CD14-positive monocyte (primary cell): ENCODE measurements at regions of chr10 and their contacts with region 1.

Region 1: DNA sequence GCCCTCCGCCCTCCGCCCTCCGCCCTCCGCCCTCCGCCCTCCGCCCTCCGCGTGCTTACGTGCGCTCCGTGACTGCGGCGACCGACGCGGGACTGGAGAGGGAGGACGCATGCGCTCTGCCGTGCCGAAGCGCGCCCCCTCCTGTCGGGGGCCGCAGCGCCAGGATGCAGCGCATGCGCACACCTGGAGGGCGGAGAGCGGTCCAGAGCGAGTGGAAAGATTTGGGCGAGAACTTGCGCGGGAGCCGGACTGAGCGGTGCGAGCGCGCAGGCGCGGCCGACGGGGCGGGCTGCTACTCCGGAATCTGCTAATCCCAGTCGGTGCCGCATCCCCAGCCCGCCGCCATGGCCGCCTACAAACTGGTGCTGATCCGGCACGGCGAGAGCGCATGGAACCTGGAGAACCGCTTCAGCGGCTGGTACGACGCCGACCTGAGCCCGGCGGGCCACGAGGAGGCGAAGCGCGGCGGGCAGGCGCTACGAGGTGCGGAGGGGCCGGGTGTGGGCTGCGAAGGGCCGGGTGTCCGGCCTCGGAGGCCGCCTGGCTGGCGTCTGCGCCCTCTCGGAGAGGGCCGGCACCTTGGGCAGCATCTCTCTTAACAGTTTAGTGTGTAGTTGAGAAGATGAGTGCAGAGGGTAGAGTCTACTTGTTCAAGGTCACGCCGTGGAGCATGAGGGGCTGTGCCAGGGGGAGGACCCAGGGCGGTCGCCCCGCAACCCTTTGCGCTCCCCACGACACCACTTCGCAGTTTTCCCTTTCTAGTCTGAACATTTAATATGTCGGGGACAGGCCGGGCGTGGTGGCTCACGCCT is at the start of gene PGAM1:
- DNase-seq: peak; percentile 96 to 99 (median 97)
- H3K4me3 ChIP-seq: peak within 1 kb of the TSS; percentile 80 to 96 (median 82)
- H3K4me3 Mint-ChIP-seq: peak within 1 kb of the TSS; percentile 85 to 90
- H3K27ac ChIP-seq: peak within 1 kb of the TSS; percentile 94 to 95
- H3K27ac Mint-ChIP-seq: peak within 1 kb of the TSS; percentile 92 to 99 (median 95)
- H3K4me1 ChIP-seq: peaks cover 75 to 80% of the 10 kb centered on the region in 2 donors
- H3K4me1 Mint-ChIP-seq: peaks cover 61% of the 10 kb centered on the region
- H3K27me3 ChIP-seq: no peaks in the 10 kb centered on the region
- H3K27me3 Mint-ChIP-seq: no peaks in the 10 kb centered on the region
- CTCF ChIP-seq: peak; percentile 65
- polyA plus RNA-seq, gene PGAM1: 276 to 749 (median 498) TPM

Region 2: DNA sequence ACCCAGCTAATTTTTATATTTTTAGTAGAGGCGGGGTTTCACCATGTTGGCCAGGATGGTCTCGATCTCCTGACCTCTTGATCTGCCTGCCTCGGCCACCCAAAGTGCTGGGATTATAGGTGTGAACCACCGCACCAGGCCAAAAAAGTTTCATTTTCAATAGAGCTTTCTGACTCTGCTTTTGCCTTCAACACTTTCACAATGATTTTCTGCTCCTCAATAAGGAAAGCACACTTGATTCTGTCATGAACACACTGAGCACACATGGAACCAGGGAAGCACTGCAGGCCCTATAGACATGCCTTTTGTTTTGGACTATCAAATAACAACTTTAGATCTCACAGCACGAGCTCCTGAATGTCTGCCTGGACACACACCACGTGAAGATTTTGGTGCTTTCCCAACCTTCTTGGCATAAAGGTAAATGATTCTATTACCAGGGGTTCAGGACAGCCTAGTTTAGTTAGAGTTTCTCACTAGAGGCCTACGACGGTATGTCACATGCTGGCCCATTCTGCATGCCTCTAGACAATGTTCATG is 33.1 kb before region 1 on chr10:
- intact Hi-C with region 1: no loop called
- DNase-seq: no peak
- H3K4me3 ChIP-seq: no peak overlapping the region
- H3K4me3 Mint-ChIP-seq: no peak overlapping the region
- H3K27ac ChIP-seq: no peak overlapping the region
- H3K27ac Mint-ChIP-seq: peak overlapping the region in 1 of 7 donors; percentile 7
- H3K4me1 ChIP-seq: peaks cover 16 to 24% of the 10 kb centered on the region in 2 donors
- H3K4me1 Mint-ChIP-seq: peaks cover 20% of the 10 kb centered on the region
- H3K27me3 ChIP-seq: no peaks in the 10 kb centered on the region
- H3K27me3 Mint-ChIP-seq: peaks cover 0 to 2% (median 0%) of the 10 kb centered on the region in 3 donors
- CTCF ChIP-seq: no peak

Region 3: DNA sequence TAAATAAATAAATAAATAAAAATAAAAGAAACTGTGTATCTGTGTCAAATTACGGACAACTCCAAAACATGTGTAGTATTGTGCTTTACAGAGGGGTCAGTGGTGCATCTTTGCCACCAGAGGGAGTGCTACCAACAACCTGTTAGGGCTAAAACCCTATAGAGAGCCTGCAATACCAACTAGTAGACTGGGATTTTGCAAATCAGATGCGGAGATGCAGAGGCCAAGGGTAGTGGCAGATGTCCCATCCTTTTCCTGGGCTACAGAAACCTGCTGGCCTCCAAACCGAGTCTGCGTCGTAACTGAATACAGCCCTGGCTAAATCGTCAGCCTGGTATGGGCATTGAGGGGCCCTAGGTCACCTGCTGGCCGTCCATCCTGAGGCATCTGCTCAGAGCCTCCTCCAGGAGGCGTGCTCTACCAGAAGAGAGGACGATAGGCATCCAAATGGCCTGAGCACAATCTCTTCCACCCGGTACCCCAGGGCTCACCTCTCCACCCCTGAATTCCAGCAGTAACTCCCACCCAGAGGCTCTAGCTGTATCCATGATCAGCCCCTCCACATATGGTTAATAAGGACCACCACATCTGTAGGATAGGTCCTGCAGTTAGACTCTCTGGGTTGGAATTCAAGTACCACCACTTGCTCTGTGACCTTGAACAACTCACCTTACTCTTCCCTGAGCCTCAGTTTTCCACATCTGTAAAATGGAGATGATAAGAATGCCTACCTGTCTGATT is 18.8 kb before region 1 on chr10:
- intact Hi-C with region 1: loop called (anchors 1 to 2 kb)
- DNase-seq: peak; percentile 74 to 80 (median 75)
- H3K4me3 ChIP-seq: peak overlapping the region in 1 of 3 experiments; percentile 31
- H3K4me3 Mint-ChIP-seq: peak overlapping the region; percentile 43 to 71
- H3K27ac ChIP-seq: peak overlapping the region; percentile 85 to 88
- H3K27ac Mint-ChIP-seq: peak overlapping the region; percentile 95 to 99 (median 98)
- H3K4me1 ChIP-seq: peaks cover 75 to 87% of the 10 kb centered on the region in 2 donors
- H3K4me1 Mint-ChIP-seq: peaks cover 67% of the 10 kb centered on the region
- H3K27me3 ChIP-seq: no peaks in the 10 kb centered on the region
- H3K27me3 Mint-ChIP-seq: no peaks in the 10 kb centered on the region
- CTCF ChIP-seq: peak; percentile 84

Region 4: DNA sequence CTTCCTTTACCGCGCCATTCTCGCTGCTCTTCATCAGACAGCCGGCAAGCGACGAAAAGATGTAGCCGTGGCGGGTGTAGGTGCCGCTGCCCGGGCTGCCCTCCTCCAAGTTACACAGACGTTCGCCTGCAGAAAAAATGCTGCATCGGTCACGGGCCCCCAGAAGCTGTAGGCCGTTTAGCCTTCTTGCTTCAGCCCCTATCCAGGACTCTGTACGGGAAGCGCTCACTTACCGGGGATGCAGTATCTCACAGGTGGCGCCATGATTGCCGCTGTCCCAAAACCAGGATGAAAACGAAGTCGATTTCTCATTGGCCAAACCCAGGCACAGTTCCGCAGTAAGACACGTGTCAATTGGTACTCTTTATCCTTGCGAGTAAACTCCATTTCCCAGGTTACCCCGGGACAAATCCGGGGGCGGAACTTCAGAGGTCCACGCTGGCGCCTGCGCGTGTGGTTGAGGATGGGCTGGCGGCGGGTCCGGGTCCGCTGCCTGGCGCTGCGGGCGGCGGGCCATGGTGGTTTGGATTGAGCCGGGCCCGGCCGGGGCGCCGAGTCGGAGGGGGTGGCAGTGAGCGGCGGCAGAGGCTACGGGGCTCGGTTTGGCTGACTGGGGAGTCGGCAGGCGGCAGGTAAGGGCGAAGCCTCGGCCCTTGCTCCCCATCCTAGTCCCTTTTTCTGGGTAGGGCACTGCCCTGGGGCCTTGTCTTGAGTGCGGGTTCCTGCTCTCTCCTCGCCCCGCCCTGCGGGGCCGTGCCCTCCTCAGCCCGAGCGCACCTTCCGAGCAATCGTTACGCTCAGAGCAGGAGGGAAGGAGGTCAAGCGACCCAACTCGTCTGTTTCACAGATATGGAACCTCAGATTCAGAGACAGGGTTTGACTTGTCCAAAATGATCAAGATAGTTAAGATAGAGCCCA is 19.8 kb after region 1 on chr10 and contains the starts of genes EXOSC1 and ZDHHC16:
- intact Hi-C with region 1: loop called in 1 of 2 experiments (anchors 2 kb)
- DNase-seq: peak; percentile 79 to 88 (median 87)
- H3K4me3 ChIP-seq: peak within 1 kb of the TSS; percentile 46 to 99 (median 74)
- H3K4me3 Mint-ChIP-seq: peak within 1 kb of the TSS; percentile 96 to 97
- H3K27ac ChIP-seq: peak within 1 kb of the TSS; percentile 18 to 71
- H3K27ac Mint-ChIP-seq: peak within 1 kb of the TSS; percentile 60 to 94 (median 89)
- H3K4me1 ChIP-seq: peaks cover 19 to 26% of the 10 kb centered on the region in 2 donors
- H3K4me1 Mint-ChIP-seq: peaks cover 34% of the 10 kb centered on the region
- H3K27me3 ChIP-seq: no peaks in the 10 kb centered on the region
- H3K27me3 Mint-ChIP-seq: no peaks in the 10 kb centered on the region
- CTCF ChIP-seq: no peak
- polyA plus RNA-seq, gene EXOSC1: 34.7 to 60.6 (median 55.8) TPM
- polyA plus RNA-seq, gene ZDHHC16: 16.3 to 26.4 (median 24.1) TPM